GM10248 (cell line): ENCODE measurements at regions of chr2 and their contacts with region 1.

Region 1: DNA sequence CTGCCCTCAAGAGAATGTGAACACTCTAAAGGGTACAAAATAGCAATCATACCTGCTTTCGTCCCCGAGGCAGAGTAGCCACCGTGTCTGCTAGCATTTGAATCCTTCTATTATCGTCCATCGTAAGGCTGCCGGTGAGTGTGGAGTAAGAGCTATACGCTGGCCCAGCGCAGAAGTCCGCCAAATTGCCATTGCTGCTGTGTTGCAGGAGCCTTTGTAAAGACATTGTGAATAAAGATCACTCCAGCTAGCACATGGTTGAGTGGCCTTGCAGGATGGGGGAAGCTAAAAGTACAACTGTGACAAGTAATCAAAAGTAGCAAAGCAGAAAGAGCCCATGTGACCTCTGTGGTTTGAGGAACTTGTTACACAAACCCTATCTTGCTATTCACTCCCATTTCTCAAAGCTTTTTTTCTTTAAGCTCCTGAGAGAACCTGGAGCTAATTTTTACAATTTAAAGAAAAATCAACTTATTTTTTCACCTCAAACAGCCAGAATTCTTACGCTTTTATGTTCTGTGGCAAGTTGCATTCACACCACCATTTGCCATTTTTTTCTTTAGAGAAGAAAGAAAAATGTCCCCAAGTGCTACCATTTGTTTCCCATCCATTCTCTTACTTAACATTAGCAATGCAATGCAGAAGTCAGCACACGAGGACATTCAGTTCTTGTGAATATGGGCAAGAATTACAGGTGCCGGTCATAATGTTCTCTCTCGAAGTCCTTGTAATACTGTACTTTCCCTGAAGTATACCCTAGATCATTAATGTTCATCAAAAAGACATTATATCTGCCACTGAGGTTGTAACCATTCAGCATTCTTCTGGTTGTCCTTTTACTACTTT is at the start of gene CYTIP:
- DNase-seq: peak; percentile 38
- CTCF ChIP-seq: no peak

Region 2: DNA sequence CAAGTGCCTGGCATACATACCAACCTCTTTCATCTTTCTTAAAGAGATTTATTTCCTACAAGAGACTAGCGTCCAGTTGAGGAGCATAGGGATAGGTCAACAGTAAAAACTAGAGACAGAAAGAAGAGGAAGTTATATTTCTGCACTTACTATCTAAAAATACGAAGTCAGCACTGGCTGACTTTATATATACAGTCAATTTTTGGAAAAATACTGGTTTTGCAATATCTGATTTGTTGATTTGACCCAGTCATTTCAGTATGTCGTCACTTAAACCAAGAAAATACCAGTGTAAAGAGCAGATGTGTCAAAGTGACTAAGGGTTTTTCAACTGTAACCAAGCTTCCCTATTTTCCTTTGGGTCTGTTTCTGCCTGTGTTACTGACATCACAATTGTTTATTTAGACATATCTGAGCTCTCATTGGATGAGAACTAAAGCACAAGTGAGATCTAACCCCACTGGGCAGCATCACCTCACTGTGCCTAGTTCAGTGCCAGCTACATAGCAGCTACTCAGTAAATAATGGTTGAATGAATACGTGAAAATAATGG is 23.2 kb before region 1 on chr2:
- CTCF ChIA-PET with region 1: interaction called, 15 read pairs
- POLR2A ChIA-PET with region 1: interaction called, 13 read pairs
- DNase-seq: no peak
- CTCF ChIP-seq: no peak

Region 3: GRCh38 chr2:157460384-157460837 is 16.4 kb after region 1 on chr2:
- CTCF ChIA-PET with region 1: interaction called, 34 read pairs
- POLR2A ChIA-PET with region 1: no interaction called
- DNase-seq: no peak
- CTCF ChIP-seq: no peak

Region 4: GRCh38 chr2:157468931-157469708 is 25.1 kb after region 1 on chr2:
- CTCF ChIA-PET with region 1: interaction called, 13 read pairs
- POLR2A ChIA-PET with region 1: interaction called, 11 read pairs
- DNase-seq: peak; percentile 66
- CTCF ChIP-seq: no peak

Region 5: DNA sequence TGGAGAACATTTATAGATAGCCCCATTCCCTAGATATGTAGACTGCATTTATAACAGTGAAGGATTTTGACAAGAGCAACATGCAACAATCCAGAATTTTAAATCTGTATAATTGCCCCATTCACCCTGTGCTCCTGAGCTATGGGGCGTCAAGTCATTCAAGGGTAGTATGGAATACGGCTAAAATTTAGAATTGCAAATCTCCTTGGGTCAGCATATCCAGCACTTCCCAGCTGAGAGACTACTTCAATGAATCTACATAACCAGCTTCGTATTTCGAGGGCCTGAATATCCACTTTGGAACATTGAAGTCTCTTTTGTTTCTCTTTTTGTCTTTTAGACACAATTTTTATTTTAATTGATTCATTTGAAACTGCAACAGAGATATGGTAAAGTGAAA is 213.1 kb after region 1 on chr2:
- CTCF ChIA-PET with region 1: no interaction called
- POLR2A ChIA-PET with region 1: no interaction called
- DNase-seq: no peak
- CTCF ChIP-seq: no peak

Region 6: DNA sequence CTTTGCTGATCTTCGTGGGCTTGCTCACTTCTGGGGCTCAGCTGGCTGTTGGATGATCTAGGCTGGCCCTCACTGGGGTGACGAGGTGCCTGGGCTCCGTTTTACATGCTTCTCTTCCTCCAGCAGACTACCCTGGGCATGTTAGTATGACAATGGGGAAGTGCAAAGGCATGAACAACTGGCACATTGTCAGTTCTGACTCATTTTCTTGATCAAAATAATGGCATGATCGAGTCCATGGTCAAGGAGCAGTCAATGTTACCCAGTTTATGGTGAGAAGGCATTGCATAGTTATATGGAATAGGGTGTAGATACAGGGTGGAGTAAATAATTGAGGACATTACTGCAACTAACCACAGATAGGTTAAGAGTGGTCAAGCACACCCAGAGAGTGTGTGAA is 647.6 kb after region 1 on chr2:
- CTCF ChIA-PET with region 1: no interaction called
- POLR2A ChIA-PET with region 1: no interaction called
- DNase-seq: no peak
- CTCF ChIP-seq: no peak